Activated CD4-positive, alpha-beta T cell treated with anti-CD3 and anti-CD28 coated beads for 36 hours (primary cell): ENCODE measurements at regions of chr9 and their contacts with region 1.

Region 1: DNA sequence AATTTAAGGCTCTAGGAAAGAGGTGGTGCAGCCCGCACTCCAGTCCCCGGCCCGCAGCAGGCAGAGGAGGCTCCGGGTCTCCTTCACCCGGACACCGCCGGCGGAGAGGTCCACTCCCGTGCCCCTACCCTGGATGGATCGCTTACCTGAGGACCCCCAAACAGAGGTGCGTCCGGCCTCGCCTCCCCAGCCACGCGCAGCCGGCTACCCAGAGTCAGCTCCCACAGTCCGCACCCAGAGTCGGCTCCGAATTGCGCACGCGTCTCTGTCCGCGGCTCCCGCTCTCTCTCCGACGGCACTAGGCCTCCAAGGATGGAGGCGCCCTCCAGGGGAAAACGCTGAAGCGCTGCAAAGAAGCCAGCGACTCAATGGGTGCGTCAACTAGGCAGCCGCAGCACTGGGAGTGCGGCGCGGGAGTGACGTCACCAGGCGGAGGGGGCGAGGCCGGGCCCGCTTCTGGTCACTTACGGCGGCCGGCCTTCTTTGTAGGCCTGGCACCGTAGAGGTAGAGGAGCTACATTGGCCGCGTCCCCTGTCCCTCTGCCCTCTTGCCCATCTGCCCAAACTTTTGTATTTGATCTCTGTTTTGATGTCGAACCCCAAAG is at the start of gene ELP1:
- DNase-seq: peak; percentile 96
- ATAC-seq: peak; percentile 88
- H3K4me3 Mint-ChIP-seq: peak within 1 kb of the TSS; percentile 98
- H3K27ac Mint-ChIP-seq: peak within 1 kb of the TSS; percentile 95
- H3K4me1 Mint-ChIP-seq: peaks cover 29% of the 10 kb centered on the region
- H3K27me3 Mint-ChIP-seq: no peaks in the 10 kb centered on the region
- total RNA-seq, gene ELP1: 31.1 to 58.0 TPM

Region 2: DNA sequence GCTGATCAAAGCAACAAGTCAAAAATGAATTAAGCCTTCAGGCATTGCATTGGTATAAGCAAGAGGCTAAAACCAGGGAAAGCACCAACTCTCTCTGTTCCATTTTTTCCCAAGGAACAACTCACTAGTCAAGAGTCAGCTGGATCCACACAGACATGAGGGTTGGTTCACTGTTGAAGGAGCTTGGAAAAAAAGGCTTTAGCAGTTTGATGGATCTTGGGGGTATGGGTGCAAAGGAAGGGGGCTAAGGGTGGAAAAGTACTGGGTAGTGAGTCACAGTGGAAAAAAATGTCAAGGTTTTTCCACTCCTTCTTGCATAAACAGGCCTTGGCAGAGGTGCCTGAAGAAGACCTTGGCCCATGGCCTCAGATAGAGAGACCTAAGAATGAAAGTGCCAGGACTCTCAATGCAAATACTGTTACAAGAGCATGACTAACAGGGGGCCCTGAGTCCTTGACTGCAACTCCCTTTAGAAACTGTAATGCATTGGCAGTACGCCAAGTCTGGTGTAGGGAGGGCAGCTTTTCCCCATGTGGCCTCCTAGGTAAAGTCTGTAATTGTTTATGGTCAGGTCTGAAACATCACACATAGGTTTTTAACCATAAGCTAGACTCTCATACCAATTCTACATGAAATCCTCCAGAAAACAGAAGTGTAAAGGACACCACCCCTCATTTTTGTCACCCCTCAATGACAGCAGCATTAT is 48.0 kb before region 1 on chr9:
- CTCF ChIA-PET with region 1: interaction called, 6 read pairs
- POLR2A ChIA-PET with region 1: no interaction called
- intact Hi-C with region 1: loop called in 1 of 2 experiments (anchors 1 kb)
- DNase-seq: peak; percentile 81
- ATAC-seq: peak; percentile 100
- H3K4me3 Mint-ChIP-seq: peak overlapping the region; percentile 50
- H3K27ac Mint-ChIP-seq: peak overlapping the region; percentile 77
- H3K4me1 Mint-ChIP-seq: peaks cover 20% of the 10 kb centered on the region
- H3K27me3 Mint-ChIP-seq: no peaks in the 10 kb centered on the region

Region 3: GRCh38 chr9:109381011-109381729 is 447.4 kb after region 1 on chr9:
- CTCF ChIA-PET with region 1: no interaction called
- POLR2A ChIA-PET with region 1: no interaction called
- intact Hi-C with region 1: no loop called
- DNase-seq: no peak
- ATAC-seq: peak; percentile 53
- H3K4me3 Mint-ChIP-seq: no peak overlapping the region
- H3K27ac Mint-ChIP-seq: no peak overlapping the region
- H3K4me1 Mint-ChIP-seq: no peaks in the 10 kb centered on the region
- H3K27me3 Mint-ChIP-seq: peaks cover 6% of the 10 kb centered on the region